ENCODE measurements at regions of chr2 and their contacts with region 1.

Region 1: GRCh38 chr2:58240670-58241545 is at the start of gene FANCL:
- DNase-seq: peak; percentile 94
- ATAC-seq: peak; percentile 97
- H3K4me3 ChIP-seq: peak within 1 kb of the TSS; percentile 67 to 88 (median 86)
- H3K27ac ChIP-seq: peak within 1 kb of the TSS; percentile 95
- H3K4me1 ChIP-seq: peaks cover 36% of the 10 kb centered on the region
- H3K27me3 ChIP-seq: peaks cover 0 to 5% of the 10 kb centered on the region in 2 experiments; a peak in 1 of 5 replicates
- CTCF ChIP-seq: peak; percentile 44; the same call in 1 of the 2 replicates
- EP300 ChIP-seq: peak; percentile 56 to 59; a peak in 3 of 4 replicates
- POLR2A ChIP-seq: peak; percentile 94 to 98
- RAD21 ChIP-seq: peak; percentile 49; the same call in 1 of the 2 replicates
- total RNA-seq, gene FANCL: 40.7 and 40.9 TPM in 2 replicates

Region 2: GRCh38 chr2:57516698-57517340 is 724.1 kb before region 1 on chr2:
- CTCF ChIA-PET with region 1: no interaction called
- POLR2A ChIA-PET with region 1: no interaction called
- in situ Hi-C with region 1: no loop called
- intact Hi-C with region 1: no loop called
- DNase-seq: peak; percentile 36
- ATAC-seq: peak; percentile 69
- H3K4me3 ChIP-seq: no peak overlapping the region
- H3K27ac ChIP-seq: no peak overlapping the region
- H3K4me1 ChIP-seq: no peaks in the 10 kb centered on the region
- H3K27me3 ChIP-seq: no peaks in the 10 kb centered on the region
- CTCF ChIP-seq: peak; percentile 71
- EP300 ChIP-seq: no peak
- POLR2A ChIP-seq: no peak
- RAD21 ChIP-seq: peak; percentile 54; the same call in 1 of the 2 replicates

Region 3: DNA sequence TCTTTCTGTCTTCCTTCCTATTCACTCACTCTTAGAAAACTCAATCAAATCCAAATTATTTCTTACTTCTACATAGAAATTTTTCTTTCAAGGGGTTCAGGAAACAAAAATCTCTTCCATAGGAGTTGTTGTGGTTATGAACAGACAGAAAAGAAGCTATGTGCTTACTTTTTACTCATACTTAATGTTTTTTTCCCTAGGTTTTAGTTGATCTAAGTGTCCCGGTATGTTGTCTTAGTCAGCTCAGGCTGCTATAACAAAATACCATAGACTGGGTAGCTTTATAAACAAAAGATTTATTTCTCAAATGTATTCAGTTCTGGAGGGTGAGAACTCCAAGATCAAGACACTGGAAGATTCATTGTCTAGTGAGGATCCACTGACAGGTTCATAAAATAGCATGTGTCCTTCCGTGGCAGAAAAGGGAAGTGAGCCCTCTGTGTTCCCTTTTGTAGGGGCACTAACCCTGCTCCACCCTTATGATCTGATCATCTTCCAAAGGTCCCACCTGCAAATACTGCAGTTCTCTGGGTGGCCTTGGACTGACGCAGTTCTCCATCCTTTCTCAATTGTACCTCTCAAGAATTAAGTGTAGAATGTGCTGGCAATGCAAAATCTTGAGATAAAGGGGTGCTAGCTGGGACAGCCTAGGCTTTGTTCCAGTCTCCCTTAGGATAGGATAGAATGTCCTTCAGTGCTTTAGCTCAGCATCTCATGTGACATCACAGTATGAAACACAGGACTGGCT is 208.7 kb before region 1 on chr2:
- CTCF ChIA-PET with region 1: no interaction called
- POLR2A ChIA-PET with region 1: no interaction called
- in situ Hi-C with region 1: no loop called
- intact Hi-C with region 1: no loop called
- DNase-seq: no peak
- ATAC-seq: no peak
- H3K4me3 ChIP-seq: no peak overlapping the region
- H3K27ac ChIP-seq: no peak overlapping the region
- H3K4me1 ChIP-seq: no peaks in the 10 kb centered on the region
- H3K27me3 ChIP-seq: no peaks in the 10 kb centered on the region
- CTCF ChIP-seq: no peak
- EP300 ChIP-seq: no peak
- POLR2A ChIP-seq: no peak
- RAD21 ChIP-seq: no peak

Region 4: GRCh38 chr2:58046585-58047372 is 194.1 kb before region 1 on chr2 and contains the start of gene VRK2:
- CTCF ChIA-PET with region 1: no interaction called
- POLR2A ChIA-PET with region 1: interaction called, 5 read pairs
- in situ Hi-C with region 1: loop called (anchors 10 kb)
- intact Hi-C with region 1: loop called (anchors 2 kb)
- DNase-seq: peak; percentile 91
- ATAC-seq: peak; percentile 97
- H3K4me3 ChIP-seq: peak within 1 kb of the TSS; percentile 59 to 76 (median 65)
- H3K27ac ChIP-seq: peak within 1 kb of the TSS; percentile 92
- H3K4me1 ChIP-seq: peaks cover 48% of the 10 kb centered on the region
- H3K27me3 ChIP-seq: no peaks in the 10 kb centered on the region; a peak in 1 of 5 replicates
- CTCF ChIP-seq: peak; percentile 52
- EP300 ChIP-seq: 0 out of 4 replicates have a peak, but pooled peaks have one; percentile 7 to 11
- POLR2A ChIP-seq: peak; percentile 86 to 91
- RAD21 ChIP-seq: peak; percentile 45
- total RNA-seq, gene VRK2: 29.1 and 41.1 TPM in 2 replicates

Region 5: GRCh38 chr2:58163913-58164312 is 77.0 kb before region 1 on chr2:
- CTCF ChIA-PET with region 1: no interaction called
- POLR2A ChIA-PET with region 1: no interaction called
- in situ Hi-C with region 1: no loop called
- intact Hi-C with region 1: loop called (anchors 5 kb)
- DNase-seq: no peak
- ATAC-seq: no peak
- H3K4me3 ChIP-seq: no peak overlapping the region
- H3K27ac ChIP-seq: no peak overlapping the region
- H3K4me1 ChIP-seq: no peaks in the 10 kb centered on the region
- H3K27me3 ChIP-seq: no peaks in the 10 kb centered on the region
- CTCF ChIP-seq: no peak
- EP300 ChIP-seq: no peak
- POLR2A ChIP-seq: no peak
- RAD21 ChIP-seq: no peak

Region 6: DNA sequence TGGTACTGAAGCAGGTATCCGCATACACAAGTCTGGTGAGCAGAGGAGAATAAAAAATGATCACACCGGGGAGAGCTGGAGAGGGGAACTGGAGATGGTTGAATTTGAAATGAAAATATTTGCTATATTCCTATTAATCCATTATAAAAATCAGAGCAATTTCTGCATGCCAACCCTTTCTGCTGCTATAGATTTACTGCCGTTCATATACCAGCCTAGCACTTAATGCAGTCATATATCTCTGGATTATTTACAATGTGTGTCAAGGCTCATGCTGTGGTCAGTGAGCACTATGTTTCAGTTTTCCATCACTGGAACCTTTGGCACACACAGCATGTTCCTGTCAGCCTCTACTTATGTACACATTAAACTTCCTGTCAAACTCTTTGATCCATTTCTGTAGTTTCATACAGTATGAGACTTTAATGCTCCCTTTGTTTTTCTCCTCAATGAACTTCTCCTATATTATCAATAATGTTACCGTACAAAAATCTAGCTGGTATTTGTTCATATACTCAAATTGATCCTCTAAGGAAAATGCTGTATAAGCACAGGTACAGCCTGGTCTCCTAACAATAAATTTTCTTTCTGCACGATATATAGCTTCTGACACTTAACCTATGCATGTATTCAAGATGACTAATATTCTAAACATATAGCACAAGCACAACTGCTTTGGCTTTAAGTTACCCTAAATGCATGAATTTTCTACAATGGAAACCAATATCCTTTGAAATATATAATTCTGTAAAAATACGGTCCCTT is 36.5 kb before region 1 on chr2:
- CTCF ChIA-PET with region 1: no interaction called
- POLR2A ChIA-PET with region 1: interaction called, 3 read pairs
- in situ Hi-C with region 1: no loop called
- intact Hi-C with region 1: loop called (anchors 1 kb)
- DNase-seq: peak; percentile 93
- ATAC-seq: peak; percentile 99
- H3K4me3 ChIP-seq: peak overlapping the region; percentile 17 to 51 (median 22); a peak in 5 of 6 replicates
- H3K27ac ChIP-seq: peak overlapping the region; percentile 64
- H3K4me1 ChIP-seq: peaks cover 51% of the 10 kb centered on the region
- H3K27me3 ChIP-seq: no peaks in the 10 kb centered on the region
- CTCF ChIP-seq: no peak
- EP300 ChIP-seq: peak in 1 of 2 experiments; percentile 85; a peak in 2 of 4 replicates
- POLR2A ChIP-seq: no peak
- RAD21 ChIP-seq: no peak

Region 7: DNA sequence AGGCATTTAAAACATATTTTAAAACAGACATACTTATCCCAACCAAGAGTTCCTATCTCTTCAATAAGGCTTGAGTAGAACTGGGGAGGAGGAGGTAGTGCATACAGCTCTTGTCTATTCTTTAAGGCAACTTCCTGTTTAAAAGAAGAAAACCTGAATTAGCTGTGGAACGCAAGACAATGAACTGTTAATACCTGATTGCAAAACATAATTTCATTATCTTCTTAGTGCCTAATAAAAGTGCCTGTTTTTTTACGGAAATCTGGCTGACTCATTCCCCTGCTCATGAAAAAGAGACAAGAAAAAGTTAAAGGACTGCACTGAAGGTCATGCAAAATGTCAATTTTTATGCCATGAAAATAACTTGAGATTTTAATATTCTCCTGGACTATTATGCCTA is 19.0 kb before region 1 on chr2:
- CTCF ChIA-PET with region 1: no interaction called
- POLR2A ChIA-PET with region 1: no interaction called
- in situ Hi-C with region 1: no loop called
- intact Hi-C with region 1: no loop called
- DNase-seq: no peak
- ATAC-seq: no peak
- H3K4me3 ChIP-seq: no peak overlapping the region
- H3K27ac ChIP-seq: no peak overlapping the region
- H3K4me1 ChIP-seq: no peaks in the 10 kb centered on the region
- H3K27me3 ChIP-seq: no peaks in the 10 kb centered on the region
- CTCF ChIP-seq: no peak
- EP300 ChIP-seq: no peak
- POLR2A ChIP-seq: no peak
- RAD21 ChIP-seq: no peak

Region 8: DNA sequence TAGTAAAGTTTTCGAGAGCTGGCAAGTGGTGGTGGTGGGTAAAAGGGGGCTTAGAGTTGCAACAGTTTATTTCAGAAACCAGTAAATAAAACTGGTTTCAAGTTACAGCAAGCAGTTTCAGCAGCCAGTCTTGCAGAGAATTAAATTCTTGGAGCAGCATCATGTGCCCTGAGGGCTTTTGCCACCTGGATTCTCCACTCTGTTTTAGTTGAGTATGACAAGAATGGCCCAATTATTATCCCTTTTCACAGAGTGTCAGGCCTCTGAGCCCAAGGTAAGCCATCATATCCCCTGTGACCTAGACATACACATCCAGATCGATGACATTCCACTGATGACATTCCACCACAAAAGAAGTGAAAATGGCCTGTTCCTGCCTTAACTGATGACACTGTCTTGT is 73.0 kb after region 1 on chr2:
- CTCF ChIA-PET with region 1: no interaction called
- POLR2A ChIA-PET with region 1: no interaction called
- in situ Hi-C with region 1: no loop called
- intact Hi-C with region 1: no loop called
- DNase-seq: no peak
- ATAC-seq: peak; percentile 44; the same call in 1 of the 3 replicates
- H3K4me3 ChIP-seq: no peak overlapping the region
- H3K27ac ChIP-seq: no peak overlapping the region
- H3K4me1 ChIP-seq: no peaks in the 10 kb centered on the region
- H3K27me3 ChIP-seq: peaks cover 0 to 7% of the 10 kb centered on the region in 2 experiments; a peak in 1 of 5 replicates
- CTCF ChIP-seq: no peak
- EP300 ChIP-seq: no peak
- POLR2A ChIP-seq: no peak
- RAD21 ChIP-seq: no peak

Measured in HepG2 (cell line).